ENCODE measurements at regions of chr11 and their contacts with region 1.

Region 1: DNA sequence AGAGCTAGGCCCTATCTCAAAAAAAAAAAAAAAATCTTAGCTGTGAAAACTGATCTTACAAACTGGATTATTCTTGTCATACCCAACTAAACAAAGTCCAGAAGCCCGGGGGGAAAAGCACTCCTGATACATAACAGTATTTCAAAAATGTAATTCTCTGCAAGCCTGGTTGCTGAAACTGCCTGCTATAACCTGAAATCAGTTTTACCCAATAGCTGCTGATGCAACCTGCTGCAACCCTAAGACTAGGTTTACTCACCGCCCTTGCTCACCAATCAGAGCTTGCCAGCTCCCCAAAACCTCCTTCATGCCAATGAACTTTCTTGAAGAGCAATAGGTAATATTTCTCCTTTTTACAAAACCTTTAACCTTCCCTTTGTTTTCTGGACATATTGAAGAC is 12.4 kb downstream of the FGF19 start:
- DNase-seq: no peak
- H3K4me3 ChIP-seq: no peak overlapping the region
- H3K27ac ChIP-seq: no peak overlapping the region
- H3K4me1 ChIP-seq: no peaks in the 10 kb centered on the region
- H3K27me3 ChIP-seq: no peaks in the 10 kb centered on the region
- CTCF ChIP-seq: no peak
- POLR2A ChIP-seq: no peak

Region 2: GRCh38 chr11:69899957-69900821 is 208.7 kb after region 1 on chr11:
- intact Hi-C with region 1: loop called (anchors 5 kb)
- DNase-seq: no peak
- H3K4me3 ChIP-seq: no peak overlapping the region
- H3K27ac ChIP-seq: no peak overlapping the region
- H3K4me1 ChIP-seq: no peaks in the 10 kb centered on the region
- H3K27me3 ChIP-seq: no peaks in the 10 kb centered on the region
- CTCF ChIP-seq: no peak
- POLR2A ChIP-seq: no peak

Region 3: DNA sequence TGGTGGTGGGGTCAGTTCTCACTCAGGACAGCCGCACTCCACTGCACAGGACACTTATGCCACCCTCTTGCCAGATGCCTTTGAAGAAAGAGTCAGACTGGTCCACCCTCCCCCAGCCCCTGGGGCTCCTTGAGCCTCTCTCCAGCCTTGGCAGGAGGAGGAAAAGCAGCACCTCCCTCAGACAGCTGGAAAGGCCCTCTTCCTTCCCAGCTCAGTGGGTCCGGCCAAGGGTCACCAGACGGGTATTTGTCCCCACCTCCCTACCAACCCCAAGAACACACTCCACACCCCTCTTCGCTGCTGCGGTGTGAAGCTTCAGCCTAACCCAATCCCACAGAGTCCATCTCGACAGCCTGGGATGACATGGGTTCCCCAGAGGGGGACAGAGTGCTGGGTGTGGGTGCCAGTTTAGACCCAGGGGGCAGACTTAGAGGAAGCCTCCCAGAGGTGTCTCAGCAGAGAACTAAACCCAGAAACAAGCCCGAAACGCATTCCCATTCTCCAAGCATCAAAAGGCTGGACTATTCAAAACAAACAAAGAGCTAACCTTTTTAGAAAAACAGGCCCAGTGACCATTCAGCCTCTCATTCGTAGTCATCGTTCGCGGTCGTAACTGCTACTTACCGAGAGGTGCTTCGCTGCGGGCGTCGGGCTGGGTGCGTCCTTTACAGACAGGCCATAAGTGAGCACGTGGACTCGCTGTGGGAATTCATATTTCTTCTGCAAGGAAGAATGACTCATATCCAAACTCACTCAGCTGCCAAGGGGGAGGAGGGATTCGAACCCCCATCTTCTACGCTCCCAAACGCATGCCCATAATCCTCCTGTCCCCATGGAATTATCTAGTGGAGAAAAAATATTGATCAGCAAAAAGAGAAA is 329.1 kb after region 1 on chr11:
- intact Hi-C with region 1: no loop called
- DNase-seq: no peak
- H3K4me3 ChIP-seq: no peak overlapping the region
- H3K27ac ChIP-seq: no peak overlapping the region
- H3K4me1 ChIP-seq: no peaks in the 10 kb centered on the region
- H3K27me3 ChIP-seq: no peaks in the 10 kb centered on the region
- CTCF ChIP-seq: no peak
- POLR2A ChIP-seq: no peak

Region 4: DNA sequence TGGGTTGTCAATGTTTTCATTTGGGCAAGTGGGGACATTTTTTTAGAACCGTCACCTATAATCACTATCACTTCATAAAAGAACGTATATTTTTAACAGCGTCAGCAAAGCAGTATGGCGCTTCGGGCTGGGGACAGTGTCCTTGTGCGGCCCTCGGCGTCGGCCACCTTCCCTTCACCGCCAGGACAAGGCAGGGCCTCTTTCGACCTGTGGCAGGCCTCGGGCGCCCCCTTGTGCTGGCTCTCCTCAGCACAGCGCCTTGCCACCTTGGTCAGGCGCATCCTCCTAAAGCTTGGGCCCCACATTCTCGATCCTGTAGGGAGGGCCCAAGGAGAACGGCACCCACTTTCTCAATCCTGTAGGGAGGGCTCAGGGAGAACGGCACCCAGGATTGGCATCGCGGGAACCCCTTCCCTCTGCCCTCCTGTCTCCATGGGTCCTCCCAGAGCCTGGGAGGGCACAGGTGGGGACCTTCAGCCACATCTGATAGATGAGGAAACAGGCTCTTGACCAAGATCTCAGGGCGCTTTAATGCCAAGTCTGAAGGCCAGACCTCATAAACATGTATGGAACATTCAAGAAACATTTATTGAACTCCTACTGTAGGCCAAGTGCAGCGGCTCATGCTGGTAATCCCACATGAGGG is 500.2 kb after region 1 on chr11:
- intact Hi-C with region 1: loop called (anchors 5 kb)
- DNase-seq: no peak
- H3K4me3 ChIP-seq: no peak overlapping the region
- H3K27ac ChIP-seq: no peak overlapping the region
- H3K4me1 ChIP-seq: no peaks in the 10 kb centered on the region
- H3K27me3 ChIP-seq: no peaks in the 10 kb centered on the region
- CTCF ChIP-seq: peak; percentile 58 to 65 (median 60)
- POLR2A ChIP-seq: no peak